Endothelial cell of umbilical vein (primary cell): ENCODE measurements at regions of chr1 and their contacts with region 1.

Region 1: GRCh38 chr1:192808518-192809306 is at the start of gene RGS2:
- DNase-seq: peak; percentile 95
- H3K4me3 ChIP-seq: peak within 1 kb of the TSS; percentile 71 to 87 (median 74)
- H3K27ac ChIP-seq: peak within 1 kb of the TSS; percentile 97
- H3K4me1 ChIP-seq: peaks cover 38% of the 10 kb centered on the region
- H3K27me3 ChIP-seq: no peaks in the 10 kb centered on the region
- CTCF ChIP-seq: peak in 1 of 2 donors; percentile 15
- POLR2A ChIP-seq: peak; percentile 100
- total RNA-seq, gene RGS2: 9.1 and 9.5 TPM in 2 replicates

Region 2: DNA sequence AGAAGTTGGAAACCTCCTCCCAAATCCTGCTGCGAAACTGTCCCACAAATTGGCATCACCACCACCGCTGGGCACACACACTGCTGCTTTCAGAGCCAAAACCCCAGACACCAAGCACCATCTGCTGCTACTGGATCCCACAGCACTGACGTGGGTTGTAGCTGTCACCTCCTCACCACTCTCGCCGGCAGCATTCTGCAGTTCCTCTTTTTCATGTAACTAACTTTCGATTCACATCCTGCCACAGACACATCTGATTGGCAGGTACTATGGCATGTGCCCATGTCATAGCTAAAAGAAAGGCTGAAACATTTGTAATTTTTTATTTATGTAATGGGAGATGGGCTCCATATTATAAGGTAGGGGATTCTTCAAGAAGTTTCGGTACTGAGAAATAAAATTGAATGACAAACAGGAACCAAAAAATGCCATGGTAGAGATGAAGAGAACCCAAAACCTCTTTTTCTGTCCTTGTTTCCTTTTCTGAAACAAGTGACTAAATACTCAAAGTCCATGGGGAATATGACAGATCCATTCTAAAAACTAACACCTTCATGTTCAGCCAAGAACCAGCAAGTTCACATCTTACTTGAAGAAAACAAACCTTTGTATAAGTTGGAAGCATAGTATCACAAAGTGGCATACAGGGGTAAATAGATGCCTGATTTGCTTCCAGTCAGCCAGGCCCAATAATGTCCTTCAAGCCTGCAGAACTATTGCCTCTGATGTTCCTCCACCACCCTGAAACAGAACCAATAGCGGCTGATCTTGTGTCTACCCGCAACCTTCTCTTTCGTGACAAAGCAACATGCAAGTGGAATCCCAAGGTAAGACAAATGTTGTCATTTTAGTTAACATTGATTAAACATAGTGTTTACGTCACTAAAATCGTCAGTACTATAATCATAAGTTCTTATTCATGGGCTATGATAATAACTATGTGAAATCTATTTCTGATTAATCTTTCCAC is 199.3 kb before region 1 on chr1:
- CTCF ChIA-PET with region 1: interaction called, 7 read pairs
- POLR2A ChIA-PET with region 1: no interaction called
- dilution Hi-C with region 1: no loop called
- intact Hi-C with region 1: loop called (anchors 1 kb)
- DNase-seq: no peak
- H3K4me3 ChIP-seq: no peak overlapping the region
- H3K27ac ChIP-seq: no peak overlapping the region
- H3K4me1 ChIP-seq: no peaks in the 10 kb centered on the region
- H3K27me3 ChIP-seq: no peaks in the 10 kb centered on the region
- CTCF ChIP-seq: no peak
- POLR2A ChIP-seq: no peak

Region 3: GRCh38 chr1:192887426-192887825 is 78.7 kb after region 1 on chr1:
- CTCF ChIA-PET with region 1: no interaction called
- POLR2A ChIA-PET with region 1: no interaction called
- dilution Hi-C with region 1: no loop called
- intact Hi-C with region 1: no loop called
- DNase-seq: no peak
- H3K4me3 ChIP-seq: no peak overlapping the region
- H3K27ac ChIP-seq: no peak overlapping the region
- H3K4me1 ChIP-seq: no peaks in the 10 kb centered on the region
- H3K27me3 ChIP-seq: no peaks in the 10 kb centered on the region
- CTCF ChIP-seq: no peak
- POLR2A ChIP-seq: no peak

Region 4: DNA sequence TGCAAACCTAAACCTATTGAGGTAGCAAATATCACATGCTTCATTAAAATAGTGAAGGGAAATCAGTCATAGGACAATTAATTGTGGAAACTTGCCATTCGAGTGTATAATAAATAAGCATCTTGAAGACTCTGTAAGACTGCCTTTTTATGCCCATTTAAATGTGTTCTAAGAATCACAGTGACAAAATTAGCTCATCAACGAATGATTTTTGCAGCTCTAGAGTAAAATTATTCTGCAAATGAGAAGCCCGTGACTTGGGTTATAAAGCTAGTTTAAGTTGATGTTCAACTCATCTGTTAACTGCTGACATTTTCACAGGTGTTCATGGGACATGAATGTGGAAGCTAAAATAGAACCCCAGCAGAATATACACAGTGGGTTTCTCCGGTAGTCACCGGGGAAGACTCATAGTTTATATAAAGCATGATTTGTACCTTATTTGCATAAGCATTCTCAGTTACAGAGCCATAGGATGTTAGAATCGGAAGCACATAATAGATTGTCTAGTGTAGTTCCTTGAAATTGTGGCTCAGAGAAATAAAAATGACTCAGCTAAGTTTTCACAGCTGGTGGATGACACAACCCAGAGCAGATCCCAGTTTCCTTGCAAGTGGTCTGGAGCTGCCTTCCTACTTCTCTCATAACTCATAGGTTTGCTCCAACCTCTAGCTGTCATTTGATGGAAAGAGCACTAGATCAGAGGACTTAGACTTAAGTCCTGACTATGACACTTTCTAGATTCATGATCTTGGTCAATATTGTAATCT is 143.2 kb after region 1 on chr1:
- CTCF ChIA-PET with region 1: interaction called, 15 read pairs
- POLR2A ChIA-PET with region 1: interaction called, 11 read pairs
- dilution Hi-C with region 1: no loop called
- intact Hi-C with region 1: loop called (anchors 1 kb)
- DNase-seq: peak; percentile 96
- H3K4me3 ChIP-seq: no peak overlapping the region
- H3K27ac ChIP-seq: peak overlapping the region; percentile 82
- H3K4me1 ChIP-seq: peaks cover 22% of the 10 kb centered on the region
- H3K27me3 ChIP-seq: no peaks in the 10 kb centered on the region
- CTCF ChIP-seq: no peak
- POLR2A ChIP-seq: peak; percentile 50

Region 5: DNA sequence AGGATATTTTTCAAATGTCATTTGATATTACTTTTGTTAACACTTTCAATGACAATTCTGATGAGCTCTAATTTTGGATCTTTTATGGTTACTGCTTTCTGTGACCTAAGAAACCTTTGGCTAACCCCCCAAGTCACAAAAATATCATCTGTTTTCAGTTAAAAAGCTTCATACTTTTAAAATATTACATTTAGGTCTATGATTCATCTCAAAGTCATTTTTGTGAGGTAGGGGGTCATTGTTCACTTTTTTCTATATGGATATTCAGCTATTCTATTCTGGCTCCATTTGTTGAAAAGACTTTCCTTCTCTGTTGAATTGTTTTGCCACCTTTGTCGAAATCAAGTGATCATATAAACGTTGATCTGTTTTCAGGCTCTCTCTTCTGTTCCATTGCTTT is 205.7 kb after region 1 on chr1:
- CTCF ChIA-PET with region 1: interaction called, 550 read pairs
- POLR2A ChIA-PET with region 1: interaction called, 9 read pairs
- dilution Hi-C with region 1: loop called (anchors 25 kb)
- intact Hi-C with region 1: loop called (anchors 1 kb)
- DNase-seq: no peak
- H3K4me3 ChIP-seq: no peak overlapping the region
- H3K27ac ChIP-seq: no peak overlapping the region
- H3K4me1 ChIP-seq: peaks cover 5% of the 10 kb centered on the region
- H3K27me3 ChIP-seq: no peaks in the 10 kb centered on the region
- CTCF ChIP-seq: no peak
- POLR2A ChIP-seq: no peak

Region 6: DNA sequence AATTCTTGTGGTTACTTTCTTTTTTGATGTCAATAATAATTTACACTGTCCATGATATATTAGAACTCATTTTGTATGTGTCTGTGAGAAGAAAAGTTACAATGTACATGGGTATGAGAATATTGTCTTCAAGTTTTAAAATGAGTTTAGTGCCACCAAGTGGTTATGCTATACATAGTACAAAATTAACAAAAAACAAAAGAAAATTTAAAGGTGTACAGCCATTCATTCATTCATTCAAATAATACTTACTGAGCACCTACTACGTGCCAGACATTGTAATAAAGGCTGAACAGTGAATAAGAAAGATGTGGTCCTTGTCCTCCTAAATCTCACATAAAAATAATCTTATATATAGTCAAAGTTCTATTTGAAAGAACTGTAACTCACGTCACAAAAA is 222.7 kb after region 1 on chr1:
- CTCF ChIA-PET with region 1: interaction called, 31 read pairs
- POLR2A ChIA-PET with region 1: interaction called, 3 read pairs
- dilution Hi-C with region 1: no loop called
- intact Hi-C with region 1: loop called (anchors 1 kb)
- DNase-seq: peak; percentile 38
- H3K4me3 ChIP-seq: no peak overlapping the region
- H3K27ac ChIP-seq: no peak overlapping the region
- H3K4me1 ChIP-seq: no peaks in the 10 kb centered on the region
- H3K27me3 ChIP-seq: no peaks in the 10 kb centered on the region
- CTCF ChIP-seq: peak; percentile 5 to 9
- POLR2A ChIP-seq: no peak

Region 7: GRCh38 chr1:193104906-193105820 is 296.5 kb after region 1 on chr1 and contains the start of gene GLRX2:
- CTCF ChIA-PET with region 1: interaction called, 6 read pairs
- POLR2A ChIA-PET with region 1: interaction called, 3 read pairs
- dilution Hi-C with region 1: no loop called
- intact Hi-C with region 1: loop called (anchors 1 kb)
- DNase-seq: peak; percentile 90
- H3K4me3 ChIP-seq: peak within 1 kb of the TSS; percentile 58 to 96 (median 93)
- H3K27ac ChIP-seq: peak within 1 kb of the TSS; percentile 69
- H3K4me1 ChIP-seq: peaks cover 15% of the 10 kb centered on the region
- H3K27me3 ChIP-seq: no peaks in the 10 kb centered on the region
- CTCF ChIP-seq: no peak
- POLR2A ChIP-seq: peak; percentile 94
- total RNA-seq, gene GLRX2: 21.5 and 22.2 TPM in 2 replicates

Region 8: DNA sequence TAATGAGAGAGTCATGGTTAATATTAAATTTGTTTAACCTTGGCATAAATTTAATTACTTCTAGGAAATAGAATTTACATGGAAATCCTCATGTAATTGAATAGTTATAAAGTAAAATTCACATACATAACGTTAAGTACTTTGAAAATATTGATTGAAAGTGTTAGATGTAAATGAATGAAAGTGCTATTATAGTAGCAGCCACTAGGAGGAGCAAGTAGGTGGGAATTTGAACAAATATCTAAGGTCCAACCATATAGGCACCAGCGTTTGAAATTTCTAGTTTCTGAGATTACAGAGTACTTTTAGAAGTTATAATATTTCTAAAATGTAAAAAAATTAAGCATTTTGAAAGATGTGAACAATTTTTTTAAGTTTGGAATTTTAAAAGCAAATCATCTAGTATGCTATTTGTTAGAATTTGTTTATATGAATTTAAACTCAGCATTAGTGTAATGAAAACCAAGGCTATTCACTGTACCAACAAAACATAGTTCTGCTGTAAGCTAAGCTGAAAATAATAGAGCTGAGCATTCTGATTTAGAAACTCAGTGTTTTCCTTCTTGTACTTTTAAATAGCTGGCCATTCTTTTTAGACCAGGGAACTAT is 374.4 kb after region 1 on chr1:
- CTCF ChIA-PET with region 1: no interaction called
- POLR2A ChIA-PET with region 1: no interaction called
- dilution Hi-C with region 1: no loop called
- intact Hi-C with region 1: loop called (anchors 5 kb)
- DNase-seq: peak; percentile 73
- H3K4me3 ChIP-seq: no peak overlapping the region
- H3K27ac ChIP-seq: no peak overlapping the region
- H3K4me1 ChIP-seq: no peaks in the 10 kb centered on the region
- H3K27me3 ChIP-seq: no peaks in the 10 kb centered on the region
- CTCF ChIP-seq: peak; percentile 42 to 43
- POLR2A ChIP-seq: no peak